ENCODE measurements at regions of chr15 and their contacts with region 1.

Region 1: DNA sequence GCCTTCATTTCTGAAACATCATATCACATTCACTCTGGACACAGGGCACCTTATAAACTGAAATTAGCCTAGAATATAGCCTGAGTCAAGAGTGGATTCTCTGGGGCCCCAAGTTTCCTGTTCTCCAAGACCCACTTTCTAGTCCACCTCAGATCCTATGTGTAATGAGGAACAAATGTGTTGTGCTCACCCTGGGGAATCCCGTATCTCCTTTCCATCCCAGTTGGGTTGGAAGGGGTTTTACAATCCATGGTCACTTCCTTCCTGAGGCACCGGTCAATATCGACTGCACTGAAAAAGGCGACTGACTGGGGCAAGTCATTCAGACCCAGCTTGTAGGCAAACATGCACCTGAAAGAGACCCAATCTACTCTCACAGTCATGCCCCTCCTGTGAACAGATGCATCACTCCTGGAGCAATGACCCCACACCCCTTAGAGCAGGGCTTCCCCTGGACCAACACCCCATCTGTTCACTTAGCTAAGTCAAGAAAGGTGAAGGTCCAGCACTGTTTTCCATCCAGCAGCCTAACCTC is 17.4 kb downstream of the POLG start:
- DNase-seq: no peak
- H3K4me3 ChIP-seq: no peak overlapping the region
- H3K27ac ChIP-seq: no peak overlapping the region
- H3K4me1 ChIP-seq: no peaks in the 10 kb centered on the region
- H3K27me3 ChIP-seq: no peaks in the 10 kb centered on the region
- CTCF ChIP-seq: no peak

Region 2: GRCh38 chr15:88835646-88836318 is 481.5 kb before region 1 on chr15:
- CTCF ChIA-PET with region 1: no interaction called
- dilution Hi-C with region 1: no loop called
- in situ Hi-C with region 1: no loop called
- intact Hi-C with region 1: no loop called
- DNase-seq: peak; percentile 80
- H3K4me3 ChIP-seq: no peak overlapping the region
- H3K27ac ChIP-seq: peak overlapping the region; percentile 4
- H3K4me1 ChIP-seq: peaks cover 20% of the 10 kb centered on the region
- H3K27me3 ChIP-seq: no peaks in the 10 kb centered on the region
- CTCF ChIP-seq: no peak

Region 3: DNA sequence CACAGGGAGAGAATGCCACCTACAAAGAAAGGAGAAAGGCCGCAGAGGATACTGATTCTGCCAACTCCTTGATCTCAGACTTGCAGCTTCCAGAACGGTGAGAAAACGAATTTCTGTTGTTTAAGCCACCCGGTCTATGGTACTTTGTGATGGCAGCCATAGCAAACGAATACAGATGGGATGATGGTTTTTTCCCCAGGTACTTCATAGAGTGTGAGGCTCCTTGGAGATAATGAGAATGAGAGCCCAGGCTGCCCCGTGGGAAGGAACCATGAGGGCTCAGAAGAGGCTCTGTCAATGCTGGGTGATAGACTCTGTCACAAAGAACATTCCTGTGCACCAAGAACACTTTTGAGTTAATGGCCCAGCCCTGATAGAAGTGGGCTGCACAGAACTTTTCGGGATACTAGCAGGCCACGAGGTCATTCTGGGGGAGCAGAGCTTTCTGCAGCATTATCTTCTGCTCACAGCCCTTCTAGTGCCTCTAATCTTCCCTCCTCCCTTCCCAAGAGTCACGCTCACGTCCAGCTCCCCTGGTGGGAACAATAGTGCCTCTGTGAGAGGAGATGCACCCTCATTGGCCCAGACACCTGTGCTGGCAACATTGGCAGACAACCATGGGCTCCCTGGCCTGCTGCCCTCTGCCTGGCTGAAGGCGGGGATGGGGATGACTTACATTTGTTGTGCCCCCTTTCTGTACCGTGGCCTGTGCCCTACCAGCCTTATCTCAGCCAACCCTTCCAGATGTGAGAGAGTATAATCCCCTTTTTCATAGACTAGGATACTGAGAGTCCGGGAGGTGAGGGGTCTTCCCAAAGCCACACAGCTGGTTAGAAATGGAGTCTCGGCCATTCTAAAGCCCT is 90.7 kb before region 1 on chr15:
- CTCF ChIA-PET with region 1: no interaction called
- dilution Hi-C with region 1: loop called (anchors 5 kb)
- in situ Hi-C with region 1: no loop called
- intact Hi-C with region 1: no loop called
- DNase-seq: peak; percentile 12
- H3K4me3 ChIP-seq: no peak overlapping the region
- H3K27ac ChIP-seq: no peak overlapping the region
- H3K4me1 ChIP-seq: no peaks in the 10 kb centered on the region
- H3K27me3 ChIP-seq: no peaks in the 10 kb centered on the region
- CTCF ChIP-seq: no peak

Region 4: GRCh38 chr15:89358755-89359439 is 41.6 kb after region 1 on chr15:
- CTCF ChIA-PET with region 1: no interaction called
- dilution Hi-C with region 1: no loop called
- in situ Hi-C with region 1: no loop called
- intact Hi-C with region 1: no loop called
- DNase-seq: peak; percentile 64
- H3K4me3 ChIP-seq: peak overlapping the region in 2 of 3 experiments; percentile 47 to 51
- H3K27ac ChIP-seq: no peak overlapping the region
- H3K4me1 ChIP-seq: peaks cover 8% of the 10 kb centered on the region
- H3K27me3 ChIP-seq: peaks cover 48% of the 10 kb centered on the region
- CTCF ChIP-seq: peak; percentile 19 to 77